ENCODE measurements at regions of chr3 and their contacts with region 1.

Region 1: DNA sequence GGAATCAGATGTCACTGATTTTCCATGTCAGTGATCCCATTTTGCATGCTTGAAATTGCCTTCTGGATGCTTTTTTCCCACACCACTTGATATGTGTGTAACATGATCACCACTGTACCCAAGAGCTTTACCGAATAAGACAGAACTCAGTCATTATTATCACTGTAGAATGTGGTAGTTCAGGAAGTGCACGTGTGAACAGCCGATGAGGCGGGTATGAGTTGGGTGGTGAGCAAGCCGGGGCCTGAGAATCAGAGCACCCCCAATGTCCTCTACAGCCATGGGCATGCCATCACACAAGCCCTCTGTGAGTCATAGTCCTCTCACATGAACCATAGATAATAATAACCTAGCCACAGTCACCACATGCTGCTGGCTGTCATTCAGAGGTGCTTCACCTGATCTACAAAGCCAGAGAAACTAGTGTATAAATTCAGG is 470.8 kb downstream of the SOX2 start:
- DNase-seq: no peak
- H3K4me3 ChIP-seq: no peak overlapping the region
- H3K4me3 Mint-ChIP-seq: no peak overlapping the region
- H3K27ac Mint-ChIP-seq: peak overlapping the region; percentile 73
- H3K4me1 ChIP-seq: peaks cover 62% of the 10 kb centered on the region
- H3K4me1 Mint-ChIP-seq: peaks cover 58% of the 10 kb centered on the region
- H3K27me3 ChIP-seq: no peaks in the 10 kb centered on the region
- H3K27me3 Mint-ChIP-seq: no peaks in the 10 kb centered on the region
- CTCF ChIP-seq: no peak

Region 2: DNA sequence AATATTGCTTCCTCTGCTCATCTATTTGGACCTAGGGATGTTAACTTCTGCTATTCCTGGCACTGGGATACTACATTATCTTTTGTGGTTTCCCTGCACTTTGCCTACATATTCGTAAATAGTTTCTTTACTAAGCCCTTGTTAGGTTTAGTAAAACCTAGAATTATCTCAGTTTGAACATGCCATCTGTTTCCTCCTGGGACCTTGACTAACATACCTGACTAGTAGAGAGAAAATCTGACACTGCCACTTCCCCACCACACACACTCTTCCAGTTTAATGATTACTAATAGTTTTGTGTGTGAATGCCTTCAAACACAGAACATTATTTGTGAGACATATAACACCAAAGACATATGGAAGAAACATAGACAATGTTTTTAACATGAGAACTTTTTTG is 499.0 kb before region 1 on chr3:
- CTCF ChIA-PET with region 1: no interaction called
- POLR2A ChIA-PET with region 1: no interaction called
- intact Hi-C with region 1: no loop called
- DNase-seq: no peak
- H3K4me3 ChIP-seq: no peak overlapping the region
- H3K4me3 Mint-ChIP-seq: no peak overlapping the region
- H3K27ac Mint-ChIP-seq: no peak overlapping the region
- H3K4me1 ChIP-seq: no peaks in the 10 kb centered on the region
- H3K4me1 Mint-ChIP-seq: no peaks in the 10 kb centered on the region
- H3K27me3 ChIP-seq: no peaks in the 10 kb centered on the region
- H3K27me3 Mint-ChIP-seq: no peaks in the 10 kb centered on the region
- CTCF ChIP-seq: no peak

Region 3: DNA sequence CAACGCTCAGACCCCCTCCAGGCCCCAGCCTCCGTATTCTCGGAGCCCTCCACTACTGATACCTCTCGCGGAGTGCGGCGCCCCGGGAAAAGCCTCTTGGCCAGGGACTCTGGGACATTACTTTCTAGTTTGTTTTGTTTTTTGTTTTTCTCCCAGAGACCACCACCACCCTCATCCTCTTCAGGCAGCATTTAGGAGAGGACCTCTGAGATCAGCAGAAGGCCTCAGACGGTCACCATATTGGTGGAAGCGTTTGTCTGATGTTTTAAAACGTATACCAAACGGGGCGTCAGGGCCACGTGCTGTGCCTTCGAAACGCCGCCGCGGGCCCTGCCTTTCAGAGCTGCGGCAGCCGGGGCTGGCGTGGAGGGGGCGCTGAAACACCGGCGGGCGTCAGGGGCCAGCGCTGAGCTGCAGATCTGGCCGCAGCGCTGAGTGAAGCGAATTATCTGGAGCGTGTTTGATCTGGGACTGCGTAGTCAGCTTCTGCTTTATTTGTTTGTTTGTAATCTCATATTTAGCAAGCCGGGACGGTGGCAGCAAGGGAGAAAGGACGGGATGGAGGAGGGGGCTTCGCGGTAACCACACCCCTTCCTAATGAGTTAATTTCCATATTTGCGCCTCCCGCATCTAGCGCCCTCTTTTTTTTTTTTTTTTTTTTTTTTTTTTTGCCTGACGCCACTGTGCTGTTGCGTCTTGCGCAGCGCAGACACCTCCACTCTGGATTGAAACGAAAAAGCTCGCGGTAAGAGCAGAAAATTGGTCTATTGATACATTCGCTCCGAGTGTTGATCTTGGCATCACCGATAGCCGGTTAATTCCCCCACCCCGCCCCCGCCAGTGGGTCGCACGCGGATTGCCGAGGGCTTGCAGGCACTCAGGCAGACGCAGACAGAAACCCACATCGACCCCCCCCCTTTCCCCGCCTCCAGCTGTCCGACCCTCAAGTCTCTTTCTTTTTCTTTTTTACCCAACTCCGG is 455.9 kb before region 1 on chr3:
- CTCF ChIA-PET with region 1: no interaction called
- POLR2A ChIA-PET with region 1: no interaction called
- intact Hi-C with region 1: loop called (anchors 2 kb)
- DNase-seq: peak; percentile 55 to 79
- H3K4me3 ChIP-seq: peak overlapping the region; percentile 38
- H3K4me3 Mint-ChIP-seq: peak overlapping the region; percentile 84
- H3K27ac Mint-ChIP-seq: peak overlapping the region; percentile 67
- H3K4me1 ChIP-seq: peaks cover 10% of the 10 kb centered on the region
- H3K4me1 Mint-ChIP-seq: no peaks in the 10 kb centered on the region
- H3K27me3 ChIP-seq: no peaks in the 10 kb centered on the region
- H3K27me3 Mint-ChIP-seq: no peaks in the 10 kb centered on the region
- CTCF ChIP-seq: peak; percentile 34 to 65

Region 4: DNA sequence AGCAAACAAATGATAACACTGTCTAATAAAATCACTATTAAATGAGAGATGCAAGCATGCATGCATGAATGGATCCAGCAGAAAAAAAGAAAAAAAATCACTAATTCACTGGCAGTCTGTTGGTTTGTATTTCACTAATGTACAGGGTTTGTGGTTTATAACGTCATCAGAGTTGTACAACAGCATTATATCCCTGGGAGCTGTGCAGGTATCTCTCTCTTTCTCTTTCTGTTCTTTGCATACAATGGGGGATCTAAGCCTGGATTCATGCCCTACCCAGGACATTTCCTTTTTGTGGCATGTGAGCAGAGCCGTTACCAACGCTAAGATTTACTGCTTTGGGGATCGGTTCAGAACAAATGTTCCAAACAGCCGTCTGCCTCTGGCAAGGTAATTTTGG is 241.3 kb before region 1 on chr3:
- CTCF ChIA-PET with region 1: no interaction called
- POLR2A ChIA-PET with region 1: no interaction called
- intact Hi-C with region 1: loop called (anchors 10 kb)
- DNase-seq: no peak
- H3K4me3 ChIP-seq: no peak overlapping the region
- H3K4me3 Mint-ChIP-seq: no peak overlapping the region
- H3K27ac Mint-ChIP-seq: no peak overlapping the region
- H3K4me1 ChIP-seq: peaks cover 14% of the 10 kb centered on the region
- H3K4me1 Mint-ChIP-seq: peaks cover 22% of the 10 kb centered on the region
- H3K27me3 ChIP-seq: no peaks in the 10 kb centered on the region
- H3K27me3 Mint-ChIP-seq: no peaks in the 10 kb centered on the region
- CTCF ChIP-seq: no peak

Region 5: DNA sequence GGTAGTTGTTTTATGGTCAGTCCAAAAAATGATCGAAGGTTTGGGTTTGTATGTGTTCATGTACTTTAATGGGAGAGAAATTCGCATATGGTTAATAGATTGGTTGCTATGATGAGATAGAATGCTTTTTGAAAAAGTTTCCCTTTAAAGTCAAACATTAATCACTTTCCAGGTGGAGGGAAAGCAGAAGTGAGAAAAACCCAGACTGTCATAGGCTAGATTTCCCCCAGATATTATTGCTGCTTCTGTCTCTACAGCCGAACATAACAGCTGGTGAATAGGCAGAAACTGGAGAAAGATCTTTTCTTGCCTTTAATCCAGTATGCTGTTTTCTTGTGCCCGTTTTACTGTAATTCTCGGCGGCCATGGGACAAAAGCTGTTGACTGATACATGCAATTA is 183.2 kb before region 1 on chr3:
- CTCF ChIA-PET with region 1: no interaction called
- POLR2A ChIA-PET with region 1: no interaction called
- intact Hi-C with region 1: no loop called
- DNase-seq: no peak
- H3K4me3 ChIP-seq: no peak overlapping the region
- H3K4me3 Mint-ChIP-seq: no peak overlapping the region
- H3K27ac Mint-ChIP-seq: no peak overlapping the region
- H3K4me1 ChIP-seq: no peaks in the 10 kb centered on the region
- H3K4me1 Mint-ChIP-seq: no peaks in the 10 kb centered on the region
- H3K27me3 ChIP-seq: no peaks in the 10 kb centered on the region
- H3K27me3 Mint-ChIP-seq: no peaks in the 10 kb centered on the region
- CTCF ChIP-seq: no peak

Region 6: GRCh38 chr3:182148360-182148759 is 34.2 kb before region 1 on chr3:
- CTCF ChIA-PET with region 1: no interaction called
- POLR2A ChIA-PET with region 1: no interaction called
- intact Hi-C with region 1: loop called (anchors 1 kb)
- DNase-seq: peak; percentile 45 to 49
- H3K4me3 ChIP-seq: no peak overlapping the region
- H3K4me3 Mint-ChIP-seq: no peak overlapping the region
- H3K27ac Mint-ChIP-seq: peak overlapping the region; percentile 76
- H3K4me1 ChIP-seq: peaks cover 18% of the 10 kb centered on the region
- H3K4me1 Mint-ChIP-seq: peaks cover 7% of the 10 kb centered on the region
- H3K27me3 ChIP-seq: no peaks in the 10 kb centered on the region
- H3K27me3 Mint-ChIP-seq: no peaks in the 10 kb centered on the region
- CTCF ChIP-seq: no peak

Region 7: GRCh38 chr3:182258538-182259177 is 76.1 kb after region 1 on chr3:
- CTCF ChIA-PET with region 1: no interaction called
- POLR2A ChIA-PET with region 1: no interaction called
- intact Hi-C with region 1: loop called (anchors 2 kb)
- DNase-seq: peak in 1 of 2 experiments; percentile 58
- H3K4me3 ChIP-seq: no peak overlapping the region
- H3K4me3 Mint-ChIP-seq: no peak overlapping the region
- H3K27ac Mint-ChIP-seq: no peak overlapping the region
- H3K4me1 ChIP-seq: no peaks in the 10 kb centered on the region; the same call in 1 of the 2 replicates
- H3K4me1 Mint-ChIP-seq: peaks cover 6% of the 10 kb centered on the region
- H3K27me3 ChIP-seq: no peaks in the 10 kb centered on the region
- H3K27me3 Mint-ChIP-seq: no peaks in the 10 kb centered on the region
- CTCF ChIP-seq: peak; percentile 66 to 68

Region 8: GRCh38 chr3:182412065-182412464 is 229.5 kb after region 1 on chr3:
- CTCF ChIA-PET with region 1: no interaction called
- POLR2A ChIA-PET with region 1: no interaction called
- intact Hi-C with region 1: no loop called
- DNase-seq: peak in 1 of 2 experiments; percentile 7
- H3K4me3 ChIP-seq: no peak overlapping the region
- H3K4me3 Mint-ChIP-seq: no peak overlapping the region
- H3K27ac Mint-ChIP-seq: no peak overlapping the region
- H3K4me1 ChIP-seq: peaks cover 5% of the 10 kb centered on the region
- H3K4me1 Mint-ChIP-seq: peaks cover 9% of the 10 kb centered on the region
- H3K27me3 ChIP-seq: no peaks in the 10 kb centered on the region
- H3K27me3 Mint-ChIP-seq: no peaks in the 10 kb centered on the region
- CTCF ChIP-seq: no peak

Region 9: GRCh38 chr3:182490596-182491491 is 308.3 kb after region 1 on chr3:
- CTCF ChIA-PET with region 1: no interaction called
- POLR2A ChIA-PET with region 1: no interaction called
- intact Hi-C with region 1: no loop called
- DNase-seq: peak in 1 of 2 experiments; percentile 22
- H3K4me3 ChIP-seq: no peak overlapping the region
- H3K4me3 Mint-ChIP-seq: no peak overlapping the region
- H3K27ac Mint-ChIP-seq: no peak overlapping the region
- H3K4me1 ChIP-seq: no peaks in the 10 kb centered on the region
- H3K4me1 Mint-ChIP-seq: no peaks in the 10 kb centered on the region
- H3K27me3 ChIP-seq: no peaks in the 10 kb centered on the region
- H3K27me3 Mint-ChIP-seq: no peaks in the 10 kb centered on the region
- CTCF ChIP-seq: peak; percentile 25 to 39